Astrocyte of the cerebellum (primary cell): ENCODE measurements at regions of chr2 and their contacts with region 1.

Region 1: DNA sequence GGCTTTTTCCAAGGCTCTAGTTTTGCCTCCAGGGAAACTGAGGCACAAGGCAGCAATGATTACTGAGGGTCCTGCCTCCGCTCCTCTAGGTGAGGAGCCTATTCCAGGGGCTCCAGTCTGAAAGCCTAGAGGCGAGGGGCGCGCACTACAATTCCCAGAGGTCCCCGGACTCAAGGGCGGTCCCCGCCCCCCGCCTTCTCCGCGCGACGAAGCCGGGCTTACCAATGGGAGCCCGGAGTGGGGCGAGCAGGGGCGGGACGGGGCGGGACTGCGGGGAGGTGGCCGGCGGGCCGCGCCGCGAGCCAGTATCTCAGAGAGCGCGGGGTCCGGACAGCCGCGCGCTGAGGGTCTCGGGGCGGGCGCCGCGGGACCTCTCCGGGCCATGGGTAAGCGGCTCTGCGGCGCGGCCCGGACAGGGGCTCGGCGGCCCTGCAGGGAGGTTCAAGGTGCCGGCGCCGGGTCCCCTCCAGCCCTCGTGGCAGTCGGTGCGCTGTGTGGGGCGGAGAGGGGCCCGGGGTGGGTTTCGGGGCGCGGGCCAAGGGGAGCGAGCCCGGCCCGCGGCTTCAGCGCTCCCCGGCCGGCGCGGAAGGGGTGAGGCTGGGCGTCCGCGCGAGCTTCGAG is at the start of gene ARID5A:
- DNase-seq: peak; percentile 58
- H3K4me3 ChIP-seq: peak within 1 kb of the TSS; percentile 63
- CTCF ChIP-seq: peak; percentile 29

Region 2: GRCh38 chr2:96274355-96275056 is 262.0 kb before region 1 on chr2:
- in situ Hi-C with region 1: loop called (anchors 25 kb)
- DNase-seq: no peak
- H3K4me3 ChIP-seq: no peak overlapping the region
- CTCF ChIP-seq: no peak

Region 3: DNA sequence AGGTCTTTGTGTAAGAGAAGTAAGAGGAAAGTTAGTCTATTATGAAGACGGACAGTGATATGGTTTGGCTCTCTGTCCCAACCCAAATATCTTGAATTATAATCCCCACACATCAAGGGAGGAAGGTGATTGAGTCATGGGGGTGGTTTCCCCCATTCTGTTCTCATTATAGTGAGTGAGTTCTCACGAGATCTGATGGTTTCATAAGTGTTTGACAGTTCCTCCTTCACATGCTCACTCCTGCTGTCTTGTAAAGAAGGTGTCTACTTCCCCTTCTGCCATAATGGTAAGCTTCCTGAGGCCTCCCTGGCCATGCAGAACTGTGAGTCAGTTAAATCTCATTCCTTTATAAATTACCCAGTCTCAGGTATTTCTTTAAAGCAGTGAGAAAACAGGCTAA is 99.0 kb before region 1 on chr2:
- in situ Hi-C with region 1: no loop called
- DNase-seq: no peak
- H3K4me3 ChIP-seq: no peak overlapping the region
- CTCF ChIP-seq: no peak

Region 4: GRCh38 chr2:96839293-96839874 is 302.8 kb after region 1 on chr2:
- in situ Hi-C with region 1: no loop called
- DNase-seq: no peak
- H3K4me3 ChIP-seq: no peak overlapping the region
- CTCF ChIP-seq: no peak